ENCODE measurements at regions of chrX and their contacts with region 1.

Region 1: DNA sequence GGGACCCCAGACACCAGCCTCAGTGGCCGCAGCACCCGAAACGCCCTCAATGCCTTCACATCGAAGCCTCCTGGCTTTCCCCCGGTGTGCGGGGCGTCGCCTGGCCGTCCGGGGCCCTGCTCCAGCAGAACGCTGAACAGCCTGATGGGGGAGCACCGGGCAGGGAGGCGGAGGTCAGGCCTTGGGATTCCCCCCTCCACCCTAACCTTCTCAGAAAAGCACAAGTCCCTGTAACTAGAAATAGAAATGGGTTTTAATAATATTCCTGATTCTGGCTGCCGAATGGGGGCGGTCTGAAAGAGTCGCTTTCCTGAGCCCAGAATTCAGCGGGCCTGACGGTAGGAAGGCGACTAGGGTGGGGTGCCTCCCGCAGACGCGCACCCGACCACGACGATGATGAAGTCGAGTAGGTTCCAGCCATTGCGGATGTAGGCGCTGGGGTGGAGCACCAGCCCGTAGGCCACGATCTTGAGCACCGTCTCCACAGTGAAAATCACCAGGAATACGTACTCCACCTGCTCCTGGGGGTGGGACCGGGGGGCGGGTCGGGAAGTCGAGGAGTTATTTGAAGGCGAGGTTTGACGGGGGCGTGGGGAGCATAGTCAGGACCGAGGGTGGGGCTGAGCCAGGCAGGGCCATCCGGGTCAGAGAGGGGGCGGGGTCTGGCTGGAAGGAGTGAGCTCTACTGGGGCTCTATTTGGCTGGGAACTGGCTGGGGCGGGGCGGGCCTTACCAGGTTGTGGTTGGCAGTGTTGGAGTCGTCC is 2.5 kb downstream of the CACNA1F start:
- DNase-seq: peak; percentile 28 to 72 (median 45)
- H3K4me3 ChIP-seq: peak overlapping the region; percentile 45
- H3K4me3 Mint-ChIP-seq: peak overlapping the region; percentile 77 to 90 (median 83)
- H3K27ac ChIP-seq: peak overlapping the region; percentile 74
- H3K27ac Mint-ChIP-seq: peak overlapping the region; percentile 88 to 98 (median 94)
- H3K4me1 ChIP-seq: peaks cover 17% of the 10 kb centered on the region
- H3K4me1 Mint-ChIP-seq: peaks cover 12 to 29% (median 17%) of the 10 kb centered on the region in 3 donors
- H3K27me3 ChIP-seq: no peaks in the 10 kb centered on the region
- H3K27me3 Mint-ChIP-seq: peaks cover 0 to 4% of the 10 kb centered on the region in 2 donors

Region 2: DNA sequence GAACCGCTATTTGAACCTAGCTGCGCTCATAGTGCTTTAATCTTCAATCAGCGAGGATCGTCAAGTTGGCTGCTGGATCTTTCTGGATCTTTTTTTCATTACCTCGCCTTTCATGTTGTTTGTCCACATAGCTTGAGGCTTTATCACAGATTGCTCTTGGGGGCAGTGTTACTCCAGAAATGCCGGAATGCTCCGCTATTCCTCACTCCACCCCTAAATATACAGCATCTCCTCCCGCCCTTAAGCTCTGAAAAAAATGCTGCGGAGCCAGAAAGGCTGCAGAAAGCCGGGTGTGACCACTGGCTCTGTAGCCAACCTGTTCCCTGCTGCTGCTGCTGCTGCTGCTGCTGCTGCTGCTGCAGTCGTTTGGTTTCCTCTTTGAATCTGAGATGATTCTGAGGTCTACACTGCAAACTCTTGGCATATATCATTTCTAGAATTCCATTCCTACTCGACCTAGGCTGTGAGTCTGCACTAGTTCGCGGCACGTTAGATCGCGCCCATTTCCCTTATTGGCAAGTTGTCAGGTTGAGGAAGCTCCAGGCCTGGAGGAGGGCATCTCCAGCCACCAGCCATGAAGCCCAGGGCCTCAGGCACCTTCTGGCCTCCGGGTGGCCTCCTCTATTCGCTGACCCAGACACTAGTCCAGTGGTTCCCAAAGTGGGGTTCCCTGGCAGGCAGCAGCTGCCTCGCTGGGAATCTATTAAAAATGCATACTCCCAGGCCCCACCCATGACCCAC is 599.1 kb before region 1 on chrX:
- CTCF ChIA-PET with region 1: no interaction called
- POLR2A ChIA-PET with region 1: interaction called, 15 read pairs
- DNase-seq: peak; percentile 27 to 88 (median 63)
- H3K4me3 ChIP-seq: peak overlapping the region; percentile 24
- H3K4me3 Mint-ChIP-seq: peak overlapping the region in 6 of 7 donors; percentile 40 to 56 (median 48)
- H3K27ac ChIP-seq: no peak overlapping the region
- H3K27ac Mint-ChIP-seq: peak overlapping the region in 5 of 8 donors; percentile 18 to 68 (median 46)
- H3K4me1 ChIP-seq: peaks cover 10% of the 10 kb centered on the region
- H3K4me1 Mint-ChIP-seq: peaks cover 6 to 12% (median 7%) of the 10 kb centered on the region in 3 donors
- H3K27me3 ChIP-seq: no peaks in the 10 kb centered on the region
- H3K27me3 Mint-ChIP-seq: no peaks in the 10 kb centered on the region

Measured in CD8-positive, alpha-beta memory T cell (primary cell).